Adrenal gland (tissue), 19 donors: ENCODE measurements at regions of chr16 and their contacts with region 1.

Region 1: GRCh38 chr16:65572156-65572555 is 450.3 kb upstream of the CDH11 start:
- DNase-seq: no peak
- H3K4me3 ChIP-seq: no peak overlapping the region
- H3K27ac ChIP-seq: no peak overlapping the region
- H3K4me1 ChIP-seq: no peaks in the 10 kb centered on the region
- H3K27me3 ChIP-seq: no peaks in the 10 kb centered on the region
- CTCF ChIP-seq: no peak
- POLR2A ChIP-seq: no peak

Region 2: GRCh38 chr16:65509172-65509571 is 63.0 kb before region 1 on chr16:
- intact Hi-C with region 1: loop called in 1 of 2 experiments (anchors 5 kb)
- DNase-seq: no peak
- H3K4me3 ChIP-seq: no peak overlapping the region
- H3K27ac ChIP-seq: no peak overlapping the region
- H3K4me1 ChIP-seq: no peaks in the 10 kb centered on the region
- H3K27me3 ChIP-seq: no peaks in the 10 kb centered on the region
- CTCF ChIP-seq: no peak
- POLR2A ChIP-seq: no peak

Region 3: DNA sequence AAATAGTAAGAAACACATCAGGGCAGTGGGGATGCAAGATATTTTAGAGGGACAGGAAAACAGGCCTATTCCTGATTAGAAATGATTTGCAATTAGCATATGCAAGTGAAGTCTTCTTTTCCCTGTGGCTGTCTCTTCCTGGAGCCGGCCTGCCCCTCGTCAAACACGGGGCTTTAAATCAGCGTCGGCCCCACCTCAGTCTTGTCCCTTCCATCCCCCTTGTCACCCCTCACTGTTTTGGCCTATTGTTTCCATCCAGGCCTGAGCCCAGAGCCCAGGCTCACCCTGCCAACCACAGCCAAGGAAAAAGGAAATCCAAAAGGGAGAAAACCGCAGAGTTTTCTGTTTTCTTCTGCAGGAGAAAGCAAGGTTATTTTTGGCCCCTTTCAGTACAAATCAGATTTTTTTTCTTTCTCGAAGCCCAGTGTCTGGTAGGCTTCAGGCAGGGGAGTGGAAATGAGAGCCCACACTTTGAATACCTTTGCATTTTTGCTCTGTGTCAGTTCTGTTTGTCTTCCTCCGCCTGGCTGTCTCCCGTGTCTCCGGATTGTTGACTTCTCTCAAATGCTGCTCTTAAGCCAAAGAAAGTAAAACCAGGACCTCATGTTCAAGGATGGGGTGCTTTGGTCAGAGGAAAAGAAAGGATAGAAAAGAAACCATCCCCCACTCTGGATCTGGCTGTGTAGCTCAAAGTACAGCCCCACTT is 50.4 kb before region 1 on chr16:
- intact Hi-C with region 1: no loop called
- DNase-seq: no peak
- H3K4me3 ChIP-seq: no peak overlapping the region
- H3K27ac ChIP-seq: peak overlapping the region in 1 of 5 donors; percentile 45
- H3K4me1 ChIP-seq: no peaks in the 10 kb centered on the region
- H3K27me3 ChIP-seq: no peaks in the 10 kb centered on the region
- CTCF ChIP-seq: no peak
- POLR2A ChIP-seq: no peak